RWPE1 (cell line): ENCODE measurements at regions of chr5 and their contacts with region 1.

Region 1: GRCh38 chr5:16489322-16489791 is 23.8 kb upstream of the ZNF622 start:
- DNase-seq: peak; percentile 60
- H3K27ac ChIP-seq: no peak overlapping the region
- CTCF ChIP-seq: peak; percentile 90

Region 2: DNA sequence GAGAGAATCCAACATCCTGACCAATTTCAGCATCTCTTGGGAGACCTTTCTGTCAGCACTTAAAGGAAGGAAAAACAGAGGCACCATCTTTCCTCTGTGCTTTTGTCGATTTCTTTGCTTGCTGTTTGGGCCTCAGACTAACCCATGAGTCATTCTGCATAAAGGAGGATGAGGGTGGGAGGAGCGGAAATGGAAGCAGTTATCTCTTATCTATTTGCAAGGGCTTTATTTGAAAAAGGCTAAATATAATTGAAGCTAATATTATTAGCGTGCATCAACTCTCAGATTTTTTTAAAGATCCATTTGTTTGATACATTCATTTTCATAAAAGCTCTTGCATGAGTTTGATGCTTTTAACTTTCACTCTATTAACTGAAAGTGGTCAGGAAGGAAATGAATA is 96.6 kb before region 1 on chr5:
- CTCF ChIA-PET with region 1: no interaction called
- POLR2A ChIA-PET with region 1: no interaction called
- DNase-seq: no peak
- H3K27ac ChIP-seq: no peak overlapping the region
- CTCF ChIP-seq: no peak

Region 3: GRCh38 chr5:16418471-16418922 is 70.9 kb before region 1 on chr5:
- CTCF ChIA-PET with region 1: no interaction called
- POLR2A ChIA-PET with region 1: no interaction called
- DNase-seq: no peak
- H3K27ac ChIP-seq: no peak overlapping the region
- CTCF ChIP-seq: no peak

Region 4: GRCh38 chr5:16552666-16553343 is 63.4 kb after region 1 on chr5:
- CTCF ChIA-PET with region 1: interaction called, 19 read pairs
- POLR2A ChIA-PET with region 1: no interaction called
- DNase-seq: peak; percentile 74
- H3K27ac ChIP-seq: no peak overlapping the region
- CTCF ChIP-seq: peak; percentile 90